ENCODE measurements at regions of chr14 and their contacts with region 1.

Region 1: GRCh38 chr14:49786315-49787110 is 18.6 kb downstream of the KLHDC2 start:
- DNase-seq: no peak
- ATAC-seq: no peak
- H3K4me3 ChIP-seq: no peak overlapping the region
- H3K27ac ChIP-seq: no peak overlapping the region
- H3K4me1 ChIP-seq: no peaks in the 10 kb centered on the region
- H3K27me3 ChIP-seq: no peaks in the 10 kb centered on the region
- CTCF ChIP-seq: no peak

Region 2: GRCh38 chr14:49828640-49829039 is 42.1 kb after region 1 on chr14:
- intact Hi-C with region 1: loop called (anchors 10 kb)
- DNase-seq: no peak
- ATAC-seq: no peak
- H3K4me3 ChIP-seq: no peak overlapping the region
- H3K27ac ChIP-seq: no peak overlapping the region
- H3K4me1 ChIP-seq: no peaks in the 10 kb centered on the region
- H3K27me3 ChIP-seq: no peaks in the 10 kb centered on the region
- CTCF ChIP-seq: no peak

Measured in lower lobe of right lung (tissue), 2 donors.